ENCODE measurements at regions of chr2 and their contacts with region 1.

Region 1: GRCh38 chr2:127064642-127065250 is 42.2 kb downstream of the BIN1 start:
- DNase-seq: peak; percentile 98
- H3K4me3 ChIP-seq: no peak overlapping the region
- H3K27ac ChIP-seq: peak overlapping the region; percentile 91
- H3K4me1 ChIP-seq: peaks cover 54% of the 10 kb centered on the region
- H3K27me3 ChIP-seq: no peaks in the 10 kb centered on the region
- CTCF ChIP-seq: peak in 1 of 2 donors; percentile 13
- POLR2A ChIP-seq: peak; percentile 18

Region 2: DNA sequence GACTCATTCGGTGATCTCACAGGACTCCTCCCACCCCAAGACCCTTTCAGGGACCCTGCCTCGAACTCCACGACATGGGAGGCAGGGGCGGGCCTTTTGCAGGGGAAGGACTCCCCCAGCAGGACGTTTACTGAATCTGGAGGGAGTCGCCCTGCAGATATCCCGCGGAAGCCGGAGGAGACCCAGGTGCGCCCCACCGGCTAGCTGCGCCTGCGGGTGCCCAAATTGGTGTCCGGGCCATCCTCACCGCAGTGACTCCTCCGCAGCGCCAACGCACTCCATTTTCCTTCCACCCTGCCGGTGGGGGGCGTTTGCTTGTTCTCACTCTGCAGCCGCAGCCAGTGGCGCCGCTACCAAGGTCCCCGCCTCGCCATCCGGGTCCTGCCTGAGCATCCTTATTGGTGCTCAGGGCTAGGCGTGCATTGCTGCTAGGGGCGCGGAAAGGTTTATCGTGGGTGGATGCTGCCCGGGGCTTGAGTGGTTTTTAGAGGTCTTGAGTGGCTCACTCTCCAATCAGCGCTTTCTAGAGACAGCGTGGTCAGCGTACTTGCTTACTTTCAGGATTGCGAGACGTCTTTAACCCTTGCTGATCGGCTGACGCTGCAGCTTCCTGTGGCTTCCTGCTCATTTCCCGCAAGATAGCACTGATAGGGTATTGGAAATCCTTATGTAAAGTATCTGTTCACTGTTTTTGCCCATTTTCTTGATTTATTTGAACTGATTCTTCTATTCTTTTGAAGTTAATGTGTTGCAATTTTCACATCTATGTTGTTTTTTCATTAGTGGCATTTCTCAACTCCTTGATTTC is 39.2 kb before region 1 on chr2:
- CTCF ChIA-PET with region 1: no interaction called
- POLR2A ChIA-PET with region 1: no interaction called
- dilution Hi-C with region 1: no loop called
- intact Hi-C with region 1: loop called (anchors 1 kb)
- DNase-seq: peak; percentile 50
- H3K4me3 ChIP-seq: peak overlapping the region; percentile 20 to 59 (median 40)
- H3K27ac ChIP-seq: no peak overlapping the region
- H3K4me1 ChIP-seq: peaks cover 13% of the 10 kb centered on the region
- H3K27me3 ChIP-seq: peaks cover 4 to 18% of the 10 kb centered on the region in 2 experiments
- CTCF ChIP-seq: peak; percentile 42 to 50
- POLR2A ChIP-seq: no peak

Region 3: DNA sequence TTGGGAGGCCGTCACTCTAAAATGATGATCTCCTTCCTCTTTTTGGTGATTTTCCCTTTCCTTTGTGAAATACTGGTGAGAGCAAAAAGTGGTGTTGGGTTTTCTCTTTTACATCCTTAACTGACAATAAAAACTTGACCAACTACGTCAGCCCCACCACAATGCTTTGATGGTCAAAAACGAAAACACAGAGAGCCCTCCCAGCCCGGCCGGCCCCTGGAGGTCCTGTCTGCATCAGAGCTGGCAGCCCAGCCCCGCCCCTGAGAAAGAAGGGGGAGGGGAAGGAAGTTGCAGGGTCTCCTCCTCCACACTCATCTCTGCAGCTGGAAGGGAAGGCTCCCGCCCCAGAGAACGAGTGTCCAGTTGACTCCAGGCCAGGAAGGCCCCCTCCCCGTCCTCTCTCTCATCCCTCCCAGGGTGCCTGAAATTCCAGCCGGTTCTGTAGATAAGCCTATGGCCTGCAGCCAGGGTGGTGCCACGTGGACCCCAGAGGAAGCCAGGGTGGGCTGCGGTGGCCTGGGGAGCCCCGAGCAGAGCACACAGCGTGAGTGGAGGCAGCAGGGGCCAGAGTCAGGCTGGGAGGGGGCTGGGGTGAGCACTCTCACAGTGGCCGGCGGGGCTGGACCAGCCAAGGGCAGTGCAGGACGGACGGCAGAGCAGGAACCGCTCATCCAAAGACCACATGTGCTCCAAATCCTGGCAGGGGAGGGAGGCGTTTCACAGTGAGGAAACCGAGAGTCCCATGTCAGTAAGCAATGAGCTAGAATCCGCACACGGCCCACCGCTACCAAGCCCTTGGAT is 22.4 kb after region 1 on chr2:
- CTCF ChIA-PET with region 1: interaction called, 51 read pairs
- POLR2A ChIA-PET with region 1: interaction called, 6 read pairs
- dilution Hi-C with region 1: no loop called
- intact Hi-C with region 1: loop called (anchors 2 kb)
- DNase-seq: peak; percentile 75
- H3K4me3 ChIP-seq: no peak overlapping the region
- H3K27ac ChIP-seq: peak overlapping the region; percentile 29
- H3K4me1 ChIP-seq: peaks cover 26% of the 10 kb centered on the region
- H3K27me3 ChIP-seq: no peaks in the 10 kb centered on the region
- CTCF ChIP-seq: no peak
- POLR2A ChIP-seq: no peak

Region 4: DNA sequence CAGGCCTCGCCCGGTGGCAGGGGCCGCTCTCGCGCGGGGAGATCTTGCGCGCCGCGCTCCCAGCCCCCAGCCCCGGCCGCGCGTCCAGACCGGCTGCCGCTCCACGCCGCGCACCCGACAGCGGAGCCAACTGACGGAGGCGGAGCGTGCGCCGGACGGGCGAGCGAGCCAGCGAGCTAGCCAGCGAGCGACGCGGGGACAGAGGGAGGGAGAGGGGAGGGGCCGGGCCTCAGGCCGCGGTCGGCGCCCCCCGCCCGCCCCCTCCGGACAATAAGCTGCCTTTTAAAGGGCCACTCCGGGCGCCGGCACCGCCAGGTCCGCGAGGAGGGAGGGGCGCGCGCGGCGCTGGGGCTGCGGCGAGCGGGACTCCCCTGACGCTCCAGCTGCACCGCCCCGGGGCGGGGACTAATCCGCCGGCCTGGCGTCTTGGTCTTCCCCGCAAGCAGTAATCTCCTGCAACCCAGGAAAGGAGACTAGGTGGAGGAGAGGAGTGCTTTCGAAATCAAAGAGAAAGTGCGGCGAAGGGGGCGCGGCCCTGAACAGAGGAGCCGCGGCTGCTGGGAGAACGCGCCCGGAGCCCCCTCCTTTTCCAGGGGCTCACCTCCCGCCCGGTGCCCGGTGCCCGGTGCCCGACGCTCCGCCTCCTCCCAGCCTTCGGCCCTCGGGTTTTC is 42.3 kb after region 1 on chr2 and contains the start of gene BIN1:
- CTCF ChIA-PET with region 1: interaction called, 56 read pairs
- POLR2A ChIA-PET with region 1: interaction called, 3 read pairs
- dilution Hi-C with region 1: no loop called
- intact Hi-C with region 1: loop called (anchors 1 kb)
- DNase-seq: peak; percentile 93
- H3K4me3 ChIP-seq: peak within 1 kb of the TSS; percentile 68 to 92 (median 78)
- H3K27ac ChIP-seq: peak within 1 kb of the TSS; percentile 68
- H3K4me1 ChIP-seq: peaks cover 6% of the 10 kb centered on the region
- H3K27me3 ChIP-seq: peaks cover 5 to 13% of the 10 kb centered on the region in 2 experiments
- CTCF ChIP-seq: no peak
- POLR2A ChIP-seq: peak; percentile 17
- total RNA-seq, gene BIN1: 36.9 and 41.1 TPM in 2 replicates

Region 5: GRCh38 chr2:127153691-127154158 is 89.0 kb after region 1 on chr2:
- CTCF ChIA-PET with region 1: interaction called, 8 read pairs
- POLR2A ChIA-PET with region 1: no interaction called
- dilution Hi-C with region 1: no loop called
- intact Hi-C with region 1: loop called (anchors 5 kb)
- DNase-seq: peak; percentile 86
- H3K4me3 ChIP-seq: no peak overlapping the region
- H3K27ac ChIP-seq: peak overlapping the region; percentile 33
- H3K4me1 ChIP-seq: peaks cover 14% of the 10 kb centered on the region
- H3K27me3 ChIP-seq: no peaks in the 10 kb centered on the region
- CTCF ChIP-seq: no peak
- POLR2A ChIP-seq: no peak

Region 6: DNA sequence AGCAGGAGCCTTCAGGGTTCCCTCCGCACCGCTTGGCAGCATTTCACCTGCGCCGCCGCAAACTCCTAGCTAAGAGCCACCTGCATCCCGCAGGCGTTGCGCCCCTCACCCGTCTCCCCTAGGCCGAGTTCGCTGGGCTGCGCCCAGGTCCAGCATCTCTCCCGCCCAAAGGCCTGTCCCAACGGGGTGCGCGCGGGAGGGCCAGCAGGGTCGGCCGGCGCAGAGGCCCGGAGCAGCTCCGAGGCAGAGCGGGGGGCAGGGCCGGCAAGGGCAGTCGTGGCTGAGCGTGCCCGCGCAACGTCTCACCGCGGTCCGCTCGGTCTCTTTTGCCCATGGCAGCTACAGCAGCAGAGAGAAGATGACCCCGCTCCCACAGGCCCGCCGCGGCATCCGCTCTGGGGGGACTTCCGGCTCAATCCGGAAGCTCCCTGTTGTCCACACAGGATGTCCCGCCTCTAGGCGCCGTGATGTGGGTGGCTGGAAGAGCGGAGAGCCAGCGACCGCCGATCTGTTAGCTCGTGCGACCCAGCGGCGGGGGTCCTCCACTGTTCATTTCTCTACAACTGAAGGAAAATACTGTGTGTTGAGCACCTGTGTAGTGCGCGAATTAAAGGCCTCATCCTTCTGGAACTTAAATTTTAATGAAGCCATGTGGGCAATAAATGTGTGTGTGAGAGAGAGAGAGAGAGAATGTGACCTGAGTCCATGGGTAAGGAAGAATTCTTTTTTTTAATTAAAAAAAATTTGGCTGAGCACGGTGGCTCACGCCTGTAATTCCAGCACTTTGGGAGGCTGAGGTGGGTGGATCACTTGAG is 229.2 kb after region 1 on chr2 and contains the start of gene ERCC3:
- CTCF ChIA-PET with region 1: interaction called, 6 read pairs
- POLR2A ChIA-PET with region 1: no interaction called
- dilution Hi-C with region 1: no loop called
- intact Hi-C with region 1: loop called (anchors 10 kb)
- DNase-seq: peak; percentile 81
- H3K4me3 ChIP-seq: peak within 1 kb of the TSS; percentile 54 to 90 (median 82)
- H3K27ac ChIP-seq: peak within 1 kb of the TSS; percentile 31
- H3K4me1 ChIP-seq: peaks cover 12% of the 10 kb centered on the region
- H3K27me3 ChIP-seq: no peaks in the 10 kb centered on the region
- CTCF ChIP-seq: no peak
- POLR2A ChIP-seq: peak; percentile 90
- total RNA-seq, gene ERCC3: 46.6 and 47.3 TPM in 2 replicates

Region 7: DNA sequence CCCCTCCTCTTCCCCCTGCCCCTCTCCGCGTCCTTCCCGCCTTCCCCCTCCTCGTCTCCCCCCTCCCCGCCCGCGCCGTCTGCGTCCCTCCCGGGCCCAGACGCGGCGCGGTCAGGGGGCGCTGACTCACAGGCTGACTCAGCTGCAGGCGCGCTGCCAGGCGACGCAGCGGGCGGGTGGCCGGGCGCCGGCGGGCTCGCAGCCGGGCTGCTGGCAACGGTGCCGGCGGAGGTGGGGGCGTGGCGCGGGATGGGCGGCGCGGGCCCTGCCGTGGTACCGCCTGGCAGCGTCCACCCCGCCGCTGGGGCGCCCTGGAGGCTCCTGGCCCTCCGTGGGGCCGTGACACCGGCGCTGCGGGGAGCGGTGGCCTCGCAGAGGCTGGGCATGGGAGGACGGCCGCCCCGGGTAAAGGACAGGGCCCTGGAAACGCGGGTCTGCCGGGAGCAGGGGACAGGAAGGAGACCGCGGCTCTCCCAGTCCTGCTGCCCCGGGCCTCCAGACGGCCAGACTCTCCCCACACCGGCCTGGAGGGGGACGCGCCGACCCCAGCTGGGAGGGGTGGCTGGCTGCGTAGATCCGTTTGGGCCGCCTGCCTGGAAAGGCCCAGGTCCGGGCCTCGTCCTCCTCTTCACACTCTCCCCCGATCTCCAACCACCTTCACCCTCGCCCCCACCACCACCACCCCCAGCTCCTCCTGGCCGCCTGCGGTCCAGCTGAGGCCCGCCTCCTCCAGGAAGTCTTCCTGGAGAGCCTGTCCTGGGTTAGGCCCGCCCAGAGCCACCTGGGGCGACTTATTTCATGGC is 343.5 kb after region 1 on chr2:
- CTCF ChIA-PET with region 1: no interaction called
- POLR2A ChIA-PET with region 1: no interaction called
- dilution Hi-C with region 1: no loop called
- intact Hi-C with region 1: no loop called
- DNase-seq: peak; percentile 92
- H3K4me3 ChIP-seq: peak overlapping the region in 2 of 3 experiments; percentile 27 to 34
- H3K27ac ChIP-seq: peak overlapping the region; percentile 95
- H3K4me1 ChIP-seq: peaks cover 40% of the 10 kb centered on the region
- H3K27me3 ChIP-seq: no peaks in the 10 kb centered on the region
- CTCF ChIP-seq: no peak
- POLR2A ChIP-seq: no peak

Measured in endothelial cell of umbilical vein (primary cell).